ENCODE measurements at regions of chr16 and their contacts with region 1.

Region 1: GRCh38 chr16:76732894-76733293 is 455.7 kb downstream of the CNTNAP4 start:
- DNase-seq: no peak
- H3K4me3 ChIP-seq: no peak overlapping the region
- H3K27ac ChIP-seq: no peak overlapping the region
- H3K4me1 ChIP-seq: no peaks in the 10 kb centered on the region
- H3K27me3 ChIP-seq: peaks cover 2% of the 10 kb centered on the region
- CTCF ChIP-seq: no peak

Region 2: GRCh38 chr16:76038097-76038496 is 694.8 kb before region 1 on chr16:
- CTCF ChIA-PET with region 1: no interaction called
- dilution Hi-C with region 1: no loop called
- in situ Hi-C with region 1: no loop called
- intact Hi-C with region 1: no loop called
- DNase-seq: no peak
- H3K4me3 ChIP-seq: no peak overlapping the region
- H3K27ac ChIP-seq: no peak overlapping the region
- H3K4me1 ChIP-seq: no peaks in the 10 kb centered on the region
- H3K27me3 ChIP-seq: no peaks in the 10 kb centered on the region
- CTCF ChIP-seq: no peak

Region 3: DNA sequence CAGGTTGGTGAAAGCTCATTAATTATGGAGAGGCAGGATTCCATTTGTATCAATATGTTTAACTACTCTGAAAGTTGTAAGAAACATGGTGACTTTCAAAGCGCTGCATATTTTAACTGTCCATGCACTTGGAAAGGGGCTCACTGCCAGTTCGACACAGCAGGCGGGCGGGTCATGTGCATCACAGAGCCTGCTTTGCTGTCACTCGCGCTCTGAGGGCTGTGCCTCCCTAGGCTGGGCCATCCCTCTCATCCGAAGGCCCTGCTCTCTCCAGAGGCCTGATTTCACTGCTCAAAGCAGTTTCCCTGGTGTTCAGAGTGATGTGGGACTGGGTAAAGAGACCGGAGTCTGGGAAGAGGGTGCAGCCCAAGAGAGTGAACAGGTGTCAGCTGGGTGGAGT is 36.1 kb after region 1 on chr16:
- CTCF ChIA-PET with region 1: no interaction called
- dilution Hi-C with region 1: no loop called
- in situ Hi-C with region 1: no loop called
- intact Hi-C with region 1: loop called (anchors 1 kb)
- DNase-seq: no peak
- H3K4me3 ChIP-seq: no peak overlapping the region
- H3K27ac ChIP-seq: no peak overlapping the region
- H3K4me1 ChIP-seq: no peaks in the 10 kb centered on the region
- H3K27me3 ChIP-seq: no peaks in the 10 kb centered on the region
- CTCF ChIP-seq: no peak